ENCODE measurements at regions of chr11 and their contacts with region 1.

Region 1: GRCh38 chr11:57800444-57801182 is 39.0 kb downstream of the CTNND1 start:
- DNase-seq: no peak
- ATAC-seq: peak; percentile 91
- H3K4me3 Mint-ChIP-seq: no peak overlapping the region
- H3K27ac Mint-ChIP-seq: peak overlapping the region; percentile 59
- H3K4me1 Mint-ChIP-seq: peaks cover 27% of the 10 kb centered on the region
- H3K27me3 Mint-ChIP-seq: no peaks in the 10 kb centered on the region

Region 2: DNA sequence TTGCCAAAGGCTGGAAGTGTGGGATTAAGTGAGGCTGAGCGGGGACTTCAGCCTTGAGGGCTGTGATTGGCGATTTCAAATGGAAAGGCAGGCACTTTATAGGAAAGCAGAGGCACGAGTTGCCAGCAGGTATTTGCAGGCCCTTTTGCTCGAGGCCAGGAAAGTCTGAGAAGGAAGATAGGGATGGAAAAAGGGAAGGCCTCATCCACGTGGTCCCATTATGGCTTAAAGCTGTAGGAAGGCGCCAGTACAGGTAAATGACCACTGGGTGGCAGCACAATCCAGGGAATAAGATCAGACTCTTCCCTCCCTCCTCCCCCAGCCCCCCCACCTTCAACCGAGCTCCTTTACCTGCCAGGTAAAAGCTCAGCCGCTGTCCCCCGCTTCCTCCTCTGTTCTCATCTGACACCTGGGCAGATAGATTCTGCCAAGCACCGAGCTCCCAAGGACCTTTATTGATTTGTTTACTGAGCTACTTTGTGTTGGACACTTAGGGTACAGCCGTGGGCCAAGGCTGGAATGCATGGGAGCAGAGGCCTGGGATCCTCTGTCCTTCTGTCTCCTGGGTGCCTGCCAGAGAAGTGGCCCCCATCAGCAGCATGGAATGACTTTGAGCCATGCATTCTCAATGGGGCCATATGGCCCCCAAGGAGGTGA is 454.9 kb before region 1 on chr11:
- CTCF ChIA-PET with region 1: interaction called, 3 read pairs
- POLR2A ChIA-PET with region 1: no interaction called
- intact Hi-C with region 1: loop called in 1 of 2 experiments (anchors 1 kb)
- DNase-seq: peak; percentile 84
- ATAC-seq: peak; percentile 87
- H3K4me3 Mint-ChIP-seq: no peak overlapping the region
- H3K27ac Mint-ChIP-seq: peak overlapping the region; percentile 52
- H3K4me1 Mint-ChIP-seq: peaks cover 5% of the 10 kb centered on the region
- H3K27me3 Mint-ChIP-seq: no peaks in the 10 kb centered on the region

Region 3: DNA sequence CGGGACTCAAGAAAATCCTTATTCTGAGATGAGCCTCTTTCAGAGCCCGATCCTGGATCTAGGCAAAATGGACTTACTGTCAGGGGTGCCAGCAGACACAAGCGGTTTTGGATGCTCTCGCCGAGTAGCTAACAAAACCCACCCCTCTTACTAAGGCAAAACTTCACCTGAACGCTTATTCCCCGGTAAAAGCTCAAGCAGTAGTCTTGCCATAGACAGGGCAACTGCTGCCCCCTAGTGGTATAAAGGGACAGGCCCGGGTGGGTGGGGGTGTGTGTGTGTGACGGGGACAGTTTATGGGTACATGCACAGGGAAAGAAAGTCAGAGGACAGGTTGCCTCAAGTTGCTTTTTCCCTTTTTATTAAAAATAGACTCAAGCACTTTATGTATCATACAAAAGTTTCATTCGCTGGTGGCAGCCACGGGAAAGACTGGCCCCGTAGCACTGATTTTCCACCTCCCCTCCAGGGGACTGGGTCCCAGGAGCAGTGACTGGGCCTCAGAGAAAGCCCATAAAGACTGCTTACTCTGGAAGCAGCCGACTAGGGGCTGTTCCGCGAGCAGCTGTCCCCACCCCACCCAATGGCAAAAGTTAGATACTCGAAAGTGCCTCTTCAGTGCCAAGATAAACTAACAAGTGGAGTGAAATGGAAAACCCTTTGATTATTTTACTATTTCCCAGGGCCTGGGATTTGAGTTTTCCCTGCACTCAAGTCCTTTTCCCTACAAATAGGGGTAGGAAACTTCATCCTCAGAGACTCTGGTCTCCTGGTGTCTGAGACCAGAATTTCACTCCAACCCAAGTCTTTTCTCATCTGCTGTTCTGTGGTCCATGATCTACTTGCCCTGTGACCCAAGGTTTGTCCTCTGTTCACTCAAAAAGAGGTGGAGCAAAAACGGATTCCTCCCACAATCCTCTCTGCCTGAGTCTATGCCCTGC is 155.6 kb before region 1 on chr11:
- CTCF ChIA-PET with region 1: interaction called, 10 read pairs
- POLR2A ChIA-PET with region 1: no interaction called
- intact Hi-C with region 1: no loop called
- DNase-seq: peak; percentile 93
- ATAC-seq: peak; percentile 79
- H3K4me3 Mint-ChIP-seq: no peak overlapping the region
- H3K27ac Mint-ChIP-seq: no peak overlapping the region
- H3K4me1 Mint-ChIP-seq: peaks cover 33% of the 10 kb centered on the region
- H3K27me3 Mint-ChIP-seq: peaks cover 47% of the 10 kb centered on the region

Region 4: GRCh38 chr11:57712256-57713150 is 88.1 kb before region 1 on chr11 and contains the start of gene TMX2:
- CTCF ChIA-PET with region 1: interaction called, 13 read pairs
- POLR2A ChIA-PET with region 1: no interaction called
- intact Hi-C with region 1: loop called (anchors 1 to 2 kb)
- DNase-seq: peak; percentile 94
- ATAC-seq: peak; percentile 93
- H3K4me3 Mint-ChIP-seq: peak within 1 kb of the TSS; percentile 97
- H3K27ac Mint-ChIP-seq: peak within 1 kb of the TSS; percentile 97
- H3K4me1 Mint-ChIP-seq: peaks cover 50% of the 10 kb centered on the region
- H3K27me3 Mint-ChIP-seq: no peaks in the 10 kb centered on the region
- total RNA-seq, gene TMX2: 59.8 to 72.5 TPM

Region 5: GRCh38 chr11:57751676-57752253 is 48.8 kb before region 1 on chr11 and contains the start of gene BTBD18:
- CTCF ChIA-PET with region 1: interaction called, 25 read pairs
- POLR2A ChIA-PET with region 1: no interaction called
- intact Hi-C with region 1: loop called (anchors 1 to 2 kb)
- DNase-seq: peak; percentile 22
- ATAC-seq: no peak
- H3K4me3 Mint-ChIP-seq: no peak within 1 kb of the TSS
- H3K27ac Mint-ChIP-seq: peak within 1 kb of the TSS; percentile 59
- H3K4me1 Mint-ChIP-seq: peaks cover 8% of the 10 kb centered on the region
- H3K27me3 Mint-ChIP-seq: no peaks in the 10 kb centered on the region
- total RNA-seq, gene BTBD18: not detected

Region 6: GRCh38 chr11:57778318-57779037 is 22.1 kb before region 1 on chr11:
- CTCF ChIA-PET with region 1: interaction called, 14 read pairs
- POLR2A ChIA-PET with region 1: no interaction called
- intact Hi-C with region 1: no loop called
- DNase-seq: no peak
- ATAC-seq: no peak
- H3K4me3 Mint-ChIP-seq: no peak overlapping the region
- H3K27ac Mint-ChIP-seq: no peak overlapping the region
- H3K4me1 Mint-ChIP-seq: peaks cover 17% of the 10 kb centered on the region
- H3K27me3 Mint-ChIP-seq: no peaks in the 10 kb centered on the region

Measured in activated CD4-positive, alpha-beta T cell treated with anti-CD3 and anti-CD28 coated beads for 36 hours (primary cell).